ENCODE measurements at regions of chr19 and their contacts with region 1.

Region 1: GRCh38 chr19:37370880-37371661 is at the start of gene ZNF527:
- DNase-seq: peak; percentile 98
- ATAC-seq: peak; percentile 99
- H3K4me3 Mint-ChIP-seq: peak within 1 kb of the TSS; percentile 85
- H3K27ac Mint-ChIP-seq: peak within 1 kb of the TSS; percentile 95
- H3K4me1 Mint-ChIP-seq: peaks cover 10% of the 10 kb centered on the region
- H3K27me3 Mint-ChIP-seq: no peaks in the 10 kb centered on the region
- total RNA-seq, gene ZNF527: 5.0 to 5.4 TPM

Region 2: DNA sequence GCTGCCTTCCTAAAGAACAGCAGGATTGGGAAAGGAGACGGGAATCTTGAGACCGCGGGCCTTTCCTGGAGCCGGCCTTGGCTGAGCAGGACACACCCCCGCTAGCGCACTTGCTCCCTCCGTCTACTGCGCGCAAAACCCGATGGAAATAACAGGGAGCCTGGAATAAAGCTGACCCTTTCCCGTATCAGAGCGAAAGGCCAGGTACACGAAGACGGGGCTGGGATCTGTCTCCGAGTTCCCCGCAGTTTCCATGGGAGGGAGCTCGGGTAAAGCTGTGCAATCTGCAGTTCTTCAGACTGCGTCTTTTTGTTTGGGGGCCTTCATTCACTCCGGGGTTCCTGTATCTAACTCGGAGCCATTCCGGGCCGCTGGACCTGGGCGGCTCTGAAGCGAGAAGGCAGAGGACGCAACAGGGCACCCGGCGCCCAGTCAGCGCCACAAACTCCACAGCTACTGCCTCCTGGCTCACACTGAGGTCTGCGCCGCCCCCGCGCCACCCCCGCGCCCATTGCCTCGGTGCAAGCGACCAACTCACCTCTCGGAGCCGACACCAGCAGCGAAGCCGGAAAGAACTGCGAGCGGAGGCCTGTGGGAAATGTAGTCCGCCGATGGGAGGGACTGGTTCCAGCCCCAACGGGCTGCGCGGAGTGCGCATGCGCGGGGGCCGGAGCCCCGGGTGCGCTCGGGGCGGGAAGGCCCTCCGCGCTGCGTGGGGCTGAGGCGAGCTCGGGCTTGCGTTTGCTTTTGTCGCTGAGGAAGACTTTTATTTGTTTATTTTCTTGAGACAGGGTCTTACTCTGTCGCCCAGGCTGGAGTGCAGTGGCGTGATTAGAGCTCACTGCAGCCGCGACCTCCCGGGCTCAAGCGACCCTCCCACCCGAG is 992.2 kb before region 1 on chr19 and contains the start of gene ZFP14:
- CTCF ChIA-PET with region 1: no interaction called
- POLR2A ChIA-PET with region 1: no interaction called
- intact Hi-C with region 1: loop called in 1 of 2 experiments (anchors 1 kb)
- DNase-seq: peak; percentile 97
- ATAC-seq: peak; percentile 99
- H3K4me3 Mint-ChIP-seq: peak within 1 kb of the TSS; percentile 93
- H3K27ac Mint-ChIP-seq: peak within 1 kb of the TSS; percentile 88
- H3K4me1 Mint-ChIP-seq: peaks cover 18% of the 10 kb centered on the region
- H3K27me3 Mint-ChIP-seq: no peaks in the 10 kb centered on the region
- total RNA-seq, gene ZFP14: 1.4 to 1.8 TPM

Region 3: DNA sequence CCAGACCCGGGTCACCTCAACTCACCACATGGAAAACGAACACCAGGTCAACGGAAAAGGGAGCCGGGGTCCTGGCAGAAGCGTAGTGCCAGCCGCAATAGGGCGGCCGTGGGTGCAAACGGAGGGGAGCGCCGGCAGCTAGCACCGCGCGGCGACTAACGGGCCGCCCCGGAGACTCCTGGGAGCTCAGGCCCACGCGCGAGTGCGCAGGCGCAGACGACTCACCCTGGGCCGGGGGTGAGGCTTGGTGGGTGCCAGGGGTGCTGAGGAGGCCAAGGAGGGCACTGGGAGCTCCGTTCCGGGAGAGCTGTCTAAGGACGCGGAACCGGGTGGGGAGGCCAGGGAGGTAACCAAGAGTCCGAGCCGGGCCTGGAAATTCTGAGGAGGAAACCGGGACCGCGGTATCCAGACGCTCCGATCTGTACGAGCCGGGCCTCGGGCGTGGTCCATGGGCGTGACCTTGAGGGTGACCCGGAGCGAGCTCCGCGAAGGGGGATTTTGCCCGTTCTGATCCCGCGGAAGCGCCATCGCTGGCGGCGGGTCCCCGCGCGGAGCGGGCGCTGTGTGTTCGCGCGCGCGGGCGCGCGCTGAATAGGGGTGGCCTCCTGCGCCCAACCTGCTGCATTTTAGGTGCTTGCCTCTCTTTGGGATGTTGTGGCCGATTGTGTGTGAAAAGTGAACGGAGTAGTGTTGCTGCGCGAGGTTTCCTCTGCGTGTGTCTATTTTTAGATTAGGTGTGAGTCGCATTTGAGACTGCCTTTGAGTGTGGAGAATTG is 765.8 kb before region 1 on chr19 and contains the start of gene ZNF382:
- CTCF ChIA-PET with region 1: no interaction called
- POLR2A ChIA-PET with region 1: no interaction called
- intact Hi-C with region 1: loop called in 1 of 2 experiments (anchors 1 kb)
- DNase-seq: peak; percentile 94
- ATAC-seq: peak; percentile 86
- H3K4me3 Mint-ChIP-seq: peak within 1 kb of the TSS; percentile 81
- H3K27ac Mint-ChIP-seq: peak within 1 kb of the TSS; percentile 91
- H3K4me1 Mint-ChIP-seq: peaks cover 20% of the 10 kb centered on the region
- H3K27me3 Mint-ChIP-seq: no peaks in the 10 kb centered on the region
- total RNA-seq, gene ZNF382: 14.9 to 20.0 TPM

Region 4: GRCh38 chr19:36973021-36973843 is 397.8 kb before region 1 on chr19:
- CTCF ChIA-PET with region 1: no interaction called
- POLR2A ChIA-PET with region 1: no interaction called
- intact Hi-C with region 1: loop called in 1 of 2 experiments (anchors 1 kb)
- DNase-seq: peak; percentile 92
- ATAC-seq: peak; percentile 98
- H3K4me3 Mint-ChIP-seq: peak overlapping the region; percentile 81
- H3K27ac Mint-ChIP-seq: peak overlapping the region; percentile 92
- H3K4me1 Mint-ChIP-seq: peaks cover 6% of the 10 kb centered on the region
- H3K27me3 Mint-ChIP-seq: no peaks in the 10 kb centered on the region

Region 5: GRCh38 chr19:37334179-37335071 is 36.6 kb before region 1 on chr19:
- CTCF ChIA-PET with region 1: no interaction called
- POLR2A ChIA-PET with region 1: interaction called, 15 read pairs
- intact Hi-C with region 1: loop called (anchors 1 to 2 kb)
- DNase-seq: peak; percentile 93
- ATAC-seq: peak; percentile 99
- H3K4me3 Mint-ChIP-seq: peak overlapping the region; percentile 79
- H3K27ac Mint-ChIP-seq: peak overlapping the region; percentile 70
- H3K4me1 Mint-ChIP-seq: peaks cover 34% of the 10 kb centered on the region
- H3K27me3 Mint-ChIP-seq: no peaks in the 10 kb centered on the region

Region 6: GRCh38 chr19:37594304-37594981 is 223.4 kb after region 1 on chr19 and contains the starts of genes ZNF540 and ZNF571:
- CTCF ChIA-PET with region 1: interaction called, 4 read pairs
- POLR2A ChIA-PET with region 1: interaction called, 3 read pairs
- intact Hi-C with region 1: loop called in 1 of 2 experiments (anchors 1 kb)
- DNase-seq: peak; percentile 97
- ATAC-seq: peak; percentile 97
- H3K4me3 Mint-ChIP-seq: peak within 1 kb of the TSS; percentile 94
- H3K27ac Mint-ChIP-seq: peak within 1 kb of the TSS; percentile 99
- H3K4me1 Mint-ChIP-seq: peaks cover 27% of the 10 kb centered on the region
- H3K27me3 Mint-ChIP-seq: no peaks in the 10 kb centered on the region
- total RNA-seq, gene ZNF540: 0.67 to 1.1 TPM
- total RNA-seq, gene ZNF571: 2.4 to 2.9 TPM

Region 7: GRCh38 chr19:37906869-37907734 is 536.0 kb after region 1 on chr19 and contains the start of gene SIPA1L3:
- CTCF ChIA-PET with region 1: no interaction called
- POLR2A ChIA-PET with region 1: no interaction called
- intact Hi-C with region 1: loop called in 1 of 2 experiments (anchors 2 kb)
- DNase-seq: peak; percentile 97
- ATAC-seq: peak; percentile 98
- H3K4me3 Mint-ChIP-seq: peak within 1 kb of the TSS; percentile 73
- H3K27ac Mint-ChIP-seq: peak within 1 kb of the TSS; percentile 74
- H3K4me1 Mint-ChIP-seq: peaks cover 20% of the 10 kb centered on the region
- H3K27me3 Mint-ChIP-seq: no peaks in the 10 kb centered on the region
- total RNA-seq, gene SIPA1L3: 10.5 to 18.3 TPM